ENCODE measurements at regions of chr15 and their contacts with region 1.

Region 1: DNA sequence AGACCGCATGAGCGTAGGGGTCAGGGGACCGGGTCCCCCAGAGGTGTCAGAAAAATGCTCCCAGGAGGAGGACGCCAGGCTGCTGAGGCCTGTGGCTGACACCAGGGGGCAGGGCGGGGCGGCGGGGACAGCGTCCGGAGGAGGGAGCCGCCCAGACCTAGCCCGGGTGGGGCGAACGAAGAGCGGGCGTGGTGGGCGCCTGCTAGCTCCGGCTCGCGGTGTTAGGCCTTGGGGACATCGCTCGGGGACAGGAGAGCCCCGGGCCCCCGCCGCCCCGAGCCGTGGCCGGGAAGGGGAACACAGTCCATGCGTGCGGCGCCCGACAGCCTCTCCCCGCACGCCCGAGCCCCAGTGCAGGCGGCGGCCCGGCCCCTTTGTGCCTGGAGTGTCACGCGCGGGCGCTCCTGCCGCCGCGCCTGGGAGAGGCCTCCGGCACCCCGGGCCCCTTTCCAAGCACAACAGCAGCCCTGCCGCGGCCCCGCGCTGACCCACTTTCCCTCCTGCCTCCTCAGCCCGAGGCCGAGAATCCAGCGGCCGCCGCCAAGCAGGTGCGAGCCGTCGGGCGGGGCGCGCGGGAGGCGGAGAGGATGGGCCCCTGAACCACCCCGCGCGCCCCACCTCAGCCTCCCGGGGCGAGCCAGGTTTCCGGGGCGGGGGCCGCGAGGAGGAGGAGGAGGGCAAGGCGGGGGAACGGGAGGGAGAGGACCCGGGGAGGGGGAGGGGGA is 111.0 kb upstream of the KLF13 start:
- DNase-seq: peak; percentile 92 to 93 (median 92)
- ATAC-seq: peak; percentile 76 to 83 (median 81)
- H3K4me3 ChIP-seq: peak overlapping the region; percentile 70 to 76 (median 72)
- H3K27ac ChIP-seq: peak overlapping the region; percentile 88 to 96 (median 96)
- H3K4me1 ChIP-seq: peaks cover 0 to 22% (median 6%) of the 10 kb centered on the region in 4 donors
- H3K27me3 ChIP-seq: no peaks in the 10 kb centered on the region
- CTCF ChIP-seq: peak; percentile 83 to 94 (median 90)
- POLR2A ChIP-seq: peak; percentile 68

Region 2: GRCh38 chr15:31272558-31273257 is 57.1 kb after region 1 on chr15:
- intact Hi-C with region 1: loop called in 1 of 2 experiments (anchors 10 kb)
- DNase-seq: peak in 1 of 3 donors; percentile 47
- ATAC-seq: peak in 2 of 4 donors; percentile 16 to 26
- H3K4me3 ChIP-seq: no peak overlapping the region
- H3K27ac ChIP-seq: no peak overlapping the region
- H3K4me1 ChIP-seq: no peaks in the 10 kb centered on the region
- H3K27me3 ChIP-seq: no peaks in the 10 kb centered on the region
- CTCF ChIP-seq: no peak
- POLR2A ChIP-seq: no peak

Region 3: DNA sequence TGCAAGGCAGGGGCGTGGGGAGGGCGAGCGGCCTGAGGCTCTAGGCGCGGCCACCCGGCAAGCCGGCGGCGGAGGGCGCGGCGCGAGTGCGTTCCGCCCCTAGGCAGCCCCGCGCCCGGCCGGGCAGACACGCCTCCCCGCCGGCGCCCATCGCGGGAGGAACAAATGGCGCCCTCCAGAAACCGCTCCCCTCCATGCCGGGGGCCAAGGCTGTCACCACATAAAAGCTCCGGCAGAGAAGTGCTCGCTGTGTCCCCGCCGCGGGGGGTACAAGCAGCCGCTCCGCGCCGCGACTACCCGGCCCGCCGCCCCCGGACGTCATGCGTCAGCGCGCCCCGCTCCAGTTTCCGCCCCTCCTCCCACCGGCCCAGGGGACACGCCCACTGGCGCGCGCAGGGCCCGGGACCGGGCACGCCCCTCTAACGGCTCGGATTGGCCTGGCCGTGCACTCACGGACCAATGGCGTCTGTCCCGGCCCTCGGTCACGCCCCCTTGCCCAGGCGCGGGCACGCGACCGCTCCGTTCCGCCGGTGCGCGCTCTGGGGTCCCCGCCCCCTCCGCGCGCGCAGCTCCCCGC is 110.6 kb after region 1 on chr15:
- intact Hi-C with region 1: loop called in 1 of 2 experiments (anchors 10 kb)
- DNase-seq: peak; percentile 99 to 100 (median 99)
- ATAC-seq: peak; percentile 84 to 90 (median 86)
- H3K4me3 ChIP-seq: peak overlapping the region; percentile 80 to 97 (median 94)
- H3K27ac ChIP-seq: peak overlapping the region; percentile 95 to 97 (median 96)
- H3K4me1 ChIP-seq: peaks cover 0 to 30% (median 12%) of the 10 kb centered on the region in 4 donors
- H3K27me3 ChIP-seq: no peaks in the 10 kb centered on the region
- CTCF ChIP-seq: peak in 1 of 4 donors; percentile 10
- POLR2A ChIP-seq: peak; percentile 99

Region 4: GRCh38 chr15:31427411-31427810 is 211.8 kb after region 1 on chr15:
- intact Hi-C with region 1: no loop called
- DNase-seq: no peak
- ATAC-seq: no peak
- H3K4me3 ChIP-seq: no peak overlapping the region
- H3K27ac ChIP-seq: no peak overlapping the region
- H3K4me1 ChIP-seq: no peaks in the 10 kb centered on the region
- H3K27me3 ChIP-seq: no peaks in the 10 kb centered on the region
- CTCF ChIP-seq: no peak
- POLR2A ChIP-seq: no peak

Measured in right lobe of liver (tissue), 6 donors.